ENCODE measurements at regions of chr2 and their contacts with region 1.

Region 1: GRCh38 chr2:121722479-121722878 is 14.2 kb downstream of the NIFK start:
- DNase-seq: no peak
- H3K4me3 Mint-ChIP-seq: no peak overlapping the region
- H3K27ac Mint-ChIP-seq: peak overlapping the region; percentile 87
- H3K4me1 Mint-ChIP-seq: peaks cover 18% of the 10 kb centered on the region
- H3K27me3 Mint-ChIP-seq: no peaks in the 10 kb centered on the region

Region 2: GRCh38 chr2:121596221-121597080 is 126.0 kb before region 1 on chr2:
- intact Hi-C with region 1: loop called (anchors 2 kb)
- DNase-seq: no peak
- H3K4me3 Mint-ChIP-seq: peak overlapping the region; percentile 52
- H3K27ac Mint-ChIP-seq: peak overlapping the region; percentile 52
- H3K4me1 Mint-ChIP-seq: peaks cover 35% of the 10 kb centered on the region
- H3K27me3 Mint-ChIP-seq: no peaks in the 10 kb centered on the region

Region 3: DNA sequence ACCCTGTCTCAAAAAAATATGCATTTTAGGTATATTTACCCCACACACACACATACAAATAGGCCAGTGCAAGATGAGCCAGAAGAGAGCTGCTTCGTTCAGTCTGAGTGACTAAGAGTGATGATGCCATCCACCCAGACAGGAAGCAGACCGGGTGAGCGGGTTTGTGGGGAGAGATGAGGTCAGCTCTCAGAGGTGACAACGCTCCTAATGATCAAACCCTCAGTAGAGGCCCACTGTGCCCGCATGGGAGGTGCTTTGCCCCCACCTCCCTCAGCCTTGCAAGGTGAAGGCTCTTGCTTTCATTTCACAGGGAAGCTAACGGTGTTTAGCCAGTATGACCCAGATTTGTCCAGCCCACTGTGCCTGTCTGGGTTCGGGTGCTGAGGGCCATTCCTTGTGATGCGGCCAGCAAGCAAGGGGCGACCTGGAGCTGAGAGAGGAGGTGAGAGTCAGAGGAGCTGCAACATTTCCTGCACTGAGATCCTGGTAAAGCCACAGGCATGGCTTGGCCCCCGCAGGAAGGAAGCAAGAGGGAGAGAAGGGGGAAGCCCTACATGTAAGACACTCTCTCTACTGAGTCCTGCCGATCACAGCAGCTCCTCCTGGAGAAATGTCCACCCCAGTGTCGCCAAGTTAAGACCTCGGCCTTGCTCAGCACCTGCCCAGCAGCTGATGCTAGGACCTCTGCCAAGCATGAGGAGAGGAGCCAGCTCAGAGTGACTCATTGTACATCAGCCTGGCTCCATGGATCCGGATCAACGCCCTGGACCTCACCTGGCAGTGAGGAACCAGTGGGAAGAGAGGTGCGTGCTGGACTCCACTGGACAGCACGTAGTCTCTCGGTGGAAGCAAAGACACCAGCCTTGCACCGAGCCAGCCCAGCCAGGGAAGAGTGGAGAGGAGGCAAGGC is 22.8 kb before region 1 on chr2:
- intact Hi-C with region 1: loop called (anchors 1 kb)
- DNase-seq: peak; percentile 81
- H3K4me3 Mint-ChIP-seq: peak overlapping the region; percentile 75
- H3K27ac Mint-ChIP-seq: peak overlapping the region; percentile 91
- H3K4me1 Mint-ChIP-seq: peaks cover 46% of the 10 kb centered on the region
- H3K27me3 Mint-ChIP-seq: no peaks in the 10 kb centered on the region

Region 4: DNA sequence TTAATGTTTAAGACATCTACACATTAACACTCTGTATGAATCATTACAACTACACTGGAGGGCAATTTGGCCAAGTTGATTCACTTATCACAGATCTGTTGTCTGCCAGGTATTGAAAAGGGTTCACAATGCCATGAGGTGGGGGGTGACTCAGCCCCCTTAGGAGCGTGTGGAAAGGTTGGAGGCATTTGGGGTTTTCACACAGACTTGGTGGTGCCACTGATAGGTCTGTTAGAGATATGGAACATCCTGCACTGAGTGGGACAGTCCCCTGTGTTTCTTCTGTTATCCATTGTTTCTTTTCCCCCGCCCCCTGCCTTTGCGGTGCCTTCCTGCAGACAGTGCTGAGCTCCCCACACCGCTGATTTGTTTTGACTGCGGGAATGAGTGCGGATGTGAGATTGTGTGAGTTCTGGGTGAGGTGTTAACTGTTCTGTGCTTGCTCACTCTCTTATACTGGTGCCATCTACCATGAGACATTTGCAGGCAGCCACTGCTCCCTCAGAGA is 23.6 kb after region 1 on chr2:
- intact Hi-C with region 1: loop called (anchors 1 kb)
- DNase-seq: no peak
- H3K4me3 Mint-ChIP-seq: no peak overlapping the region
- H3K27ac Mint-ChIP-seq: peak overlapping the region; percentile 43
- H3K4me1 Mint-ChIP-seq: peaks cover 13% of the 10 kb centered on the region
- H3K27me3 Mint-ChIP-seq: peaks cover 2% of the 10 kb centered on the region

Measured in activated T-helper 2 cell treated with anti-CD3 and anti-CD28 coated beads, Interferon-gamma antibody, Interleukin-2, Interleukin-4, amounts not matched to agents 10 μg/mL and 5 μg/mL and 100 μg/mL, durations not matched to agents 14 hours and 24 hours and 36 hours (primary cell).